RWPE1 (cell line): ENCODE measurements at regions of chr7 and their contacts with region 1.

Region 1: GRCh38 chr7:6260291-6261187 is 11.9 kb downstream of the CYTH3 start:
- DNase-seq: no peak
- H3K27ac ChIP-seq: no peak overlapping the region
- CTCF ChIP-seq: no peak

Region 2: GRCh38 chr7:5279734-5280133 is 980.8 kb before region 1 on chr7:
- CTCF ChIA-PET with region 1: interaction called, 10 read pairs
- POLR2A ChIA-PET with region 1: no interaction called
- DNase-seq: no peak
- H3K27ac ChIP-seq: no peak overlapping the region
- CTCF ChIP-seq: no peak

Region 3: DNA sequence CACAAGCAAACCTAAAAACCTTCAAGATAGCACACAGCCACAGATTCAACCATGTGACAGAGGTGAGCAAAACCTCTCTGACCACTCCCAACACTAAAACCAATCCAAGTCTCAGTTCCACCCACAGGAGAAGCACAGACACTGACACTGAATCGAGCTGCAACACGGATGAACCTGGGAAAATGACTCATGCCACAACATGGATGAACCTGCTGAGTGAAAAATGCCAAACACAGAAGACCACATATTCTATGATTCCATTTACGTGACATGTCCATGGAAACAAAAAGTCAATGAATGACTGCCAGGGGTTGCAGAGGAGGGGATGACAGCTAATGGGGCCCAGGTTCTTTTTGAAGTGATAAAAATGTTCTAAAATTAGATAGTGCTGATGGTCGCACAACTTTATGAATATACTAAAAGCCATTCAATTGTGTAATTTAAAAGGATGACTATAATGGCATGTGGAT is 10.1 kb before region 1 on chr7:
- CTCF ChIA-PET with region 1: no interaction called
- POLR2A ChIA-PET with region 1: no interaction called
- DNase-seq: peak; percentile 55
- H3K27ac ChIP-seq: no peak overlapping the region
- CTCF ChIP-seq: no peak